IMR-90 (cell line): ENCODE measurements at regions of chrX and their contacts with region 1.

Region 1: GRCh38 chrX:46376246-46376885 is 168.9 kb downstream of the ZNF674 start:
- DNase-seq: peak; percentile 48
- ATAC-seq: peak; percentile 83
- H3K4me3 ChIP-seq: no peak overlapping the region
- H3K27ac ChIP-seq: no peak overlapping the region
- H3K4me1 ChIP-seq: 0 out of 2 replicates have a peak, but pooled peaks cover 2% of the 10 kb centered on the region
- H3K27me3 ChIP-seq: no peaks in the 10 kb centered on the region
- CTCF ChIP-seq: peak; percentile 45
- POLR2A ChIP-seq: no peak
- RAD21 ChIP-seq: peak; percentile 55

Region 2: GRCh38 chrX:45824471-45824870 is 551.9 kb before region 1 on chrX:
- CTCF ChIA-PET with region 1: no interaction called
- POLR2A ChIA-PET with region 1: no interaction called
- dilution Hi-C with region 1: no loop called
- in situ Hi-C with region 1: no loop called
- intact Hi-C with region 1: loop called (anchors 1 kb)
- DNase-seq: peak; percentile 96
- ATAC-seq: peak; percentile 92
- H3K4me3 ChIP-seq: no peak overlapping the region
- H3K27ac ChIP-seq: no peak overlapping the region
- H3K4me1 ChIP-seq: no peaks in the 10 kb centered on the region
- H3K27me3 ChIP-seq: peaks cover 2% of the 10 kb centered on the region; the same call in 1 of the 2 replicates
- CTCF ChIP-seq: peak; percentile 81
- POLR2A ChIP-seq: no peak
- RAD21 ChIP-seq: peak; percentile 81

Region 3: GRCh38 chrX:46102360-46102759 is 274.0 kb before region 1 on chrX:
- CTCF ChIA-PET with region 1: no interaction called
- POLR2A ChIA-PET with region 1: no interaction called
- dilution Hi-C with region 1: no loop called
- in situ Hi-C with region 1: no loop called
- intact Hi-C with region 1: no loop called
- DNase-seq: no peak
- ATAC-seq: no peak
- H3K4me3 ChIP-seq: no peak overlapping the region
- H3K27ac ChIP-seq: no peak overlapping the region
- H3K4me1 ChIP-seq: no peaks in the 10 kb centered on the region
- H3K27me3 ChIP-seq: no peaks in the 10 kb centered on the region
- CTCF ChIP-seq: no peak
- POLR2A ChIP-seq: no peak
- RAD21 ChIP-seq: no peak

Region 4: GRCh38 chrX:46208225-46208854 is 168.0 kb before region 1 on chrX:
- CTCF ChIA-PET with region 1: no interaction called
- POLR2A ChIA-PET with region 1: no interaction called
- dilution Hi-C with region 1: no loop called
- in situ Hi-C with region 1: no loop called
- intact Hi-C with region 1: no loop called
- DNase-seq: no peak
- ATAC-seq: no peak
- H3K4me3 ChIP-seq: no peak overlapping the region
- H3K27ac ChIP-seq: no peak overlapping the region
- H3K4me1 ChIP-seq: no peaks in the 10 kb centered on the region
- H3K27me3 ChIP-seq: peaks cover 10% of the 10 kb centered on the region
- CTCF ChIP-seq: no peak
- POLR2A ChIP-seq: no peak
- RAD21 ChIP-seq: no peak

Region 5: GRCh38 chrX:46704767-46705386 is 328.5 kb after region 1 on chrX:
- CTCF ChIA-PET with region 1: no interaction called
- POLR2A ChIA-PET with region 1: no interaction called
- dilution Hi-C with region 1: no loop called
- in situ Hi-C with region 1: no loop called
- intact Hi-C with region 1: no loop called
- DNase-seq: peak; percentile 60
- ATAC-seq: no peak
- H3K4me3 ChIP-seq: no peak overlapping the region
- H3K27ac ChIP-seq: no peak overlapping the region
- H3K4me1 ChIP-seq: peaks cover 2% of the 10 kb centered on the region; the same call in 1 of the 2 replicates
- H3K27me3 ChIP-seq: no peaks in the 10 kb centered on the region
- CTCF ChIP-seq: no peak
- POLR2A ChIP-seq: no peak
- RAD21 ChIP-seq: no peak

Region 6: GRCh38 chrX:47958761-47959342 is 1582.5 kb after region 1 on chrX:
- CTCF ChIA-PET with region 1: no interaction called
- POLR2A ChIA-PET with region 1: no interaction called
- dilution Hi-C with region 1: no loop called
- in situ Hi-C with region 1: no loop called
- intact Hi-C with region 1: no loop called
- DNase-seq: no peak
- ATAC-seq: no peak
- H3K4me3 ChIP-seq: no peak overlapping the region
- H3K27ac ChIP-seq: no peak overlapping the region
- H3K4me1 ChIP-seq: no peaks in the 10 kb centered on the region
- H3K27me3 ChIP-seq: no peaks in the 10 kb centered on the region
- CTCF ChIP-seq: 0 out of 2 replicates have a peak, but pooled peaks have one; percentile 8
- POLR2A ChIP-seq: no peak
- RAD21 ChIP-seq: no peak